ENCODE measurements at regions of chr13 and their contacts with region 1.

Region 1: GRCh38 chr13:39217471-39217870 is 179.2 kb downstream of the NHLRC3 start:
- DNase-seq: no peak
- ATAC-seq: no peak
- H3K4me3 Mint-ChIP-seq: no peak overlapping the region
- H3K27ac Mint-ChIP-seq: no peak overlapping the region
- H3K4me1 Mint-ChIP-seq: no peaks in the 10 kb centered on the region
- H3K27me3 Mint-ChIP-seq: peaks cover 19% of the 10 kb centered on the region

Region 2: DNA sequence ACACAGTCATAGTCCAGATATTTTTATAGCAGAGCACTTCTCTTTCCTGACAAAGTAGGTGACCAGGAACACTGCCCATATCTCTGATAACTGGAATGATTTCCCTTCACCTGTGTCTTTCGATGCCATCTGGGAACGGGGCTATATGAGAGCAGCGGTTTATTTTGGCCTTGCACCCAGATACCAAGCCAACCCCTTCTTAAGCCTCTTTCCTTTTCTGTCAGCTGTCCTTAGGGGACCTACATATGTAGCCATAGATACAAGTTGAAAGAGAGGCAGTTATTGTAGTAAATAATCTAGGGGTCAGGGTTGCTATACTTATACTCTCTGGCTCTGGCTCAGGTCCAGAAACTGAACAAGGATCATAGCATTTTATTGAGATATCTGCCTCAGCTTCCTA is 50.5 kb before region 1 on chr13:
- CTCF ChIA-PET with region 1: no interaction called
- POLR2A ChIA-PET with region 1: no interaction called
- intact Hi-C with region 1: loop called in 1 of 2 experiments (anchors 2 kb)
- DNase-seq: no peak
- ATAC-seq: no peak
- H3K4me3 Mint-ChIP-seq: no peak overlapping the region
- H3K27ac Mint-ChIP-seq: no peak overlapping the region
- H3K4me1 Mint-ChIP-seq: no peaks in the 10 kb centered on the region
- H3K27me3 Mint-ChIP-seq: peaks cover 15% of the 10 kb centered on the region